Left cardiac atrium (tissue), 4 donors: ENCODE measurements at regions of chr1 and their contacts with region 1.

Region 1: GRCh38 chr1:60281360-60281932 is 207.9 kb upstream of the C1orf87 start:
- DNase-seq: peak; percentile 65
- ATAC-seq: peak; percentile 96 to 98

Region 2: GRCh38 chr1:59971464-59971911 is 310.0 kb before region 1 on chr1:
- intact Hi-C with region 1: loop called in 1 of 2 experiments (anchors 5 kb)
- DNase-seq: peak; percentile 71
- ATAC-seq: peak; percentile 84 to 89

Region 3: DNA sequence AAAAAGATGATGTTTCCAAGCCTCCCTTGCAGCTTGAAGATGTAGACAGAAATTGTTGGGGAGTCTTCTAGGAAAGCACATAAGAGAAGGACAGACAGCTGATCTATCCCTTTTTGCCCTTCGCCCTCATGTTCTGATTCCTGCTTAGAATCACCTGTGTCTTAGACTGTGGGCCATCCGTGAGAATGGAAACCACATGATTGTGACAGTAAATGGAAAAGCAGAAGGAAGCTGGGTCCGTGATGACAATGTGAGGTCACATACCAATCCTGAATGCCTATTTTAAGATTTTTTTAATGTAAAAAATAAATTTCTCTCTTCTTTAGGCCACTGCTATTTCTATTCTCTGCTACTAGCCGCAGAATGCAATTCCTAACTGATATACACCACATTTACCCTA is 140.2 kb before region 1 on chr1:
- intact Hi-C with region 1: no loop called
- DNase-seq: no peak
- ATAC-seq: no peak

Region 4: DNA sequence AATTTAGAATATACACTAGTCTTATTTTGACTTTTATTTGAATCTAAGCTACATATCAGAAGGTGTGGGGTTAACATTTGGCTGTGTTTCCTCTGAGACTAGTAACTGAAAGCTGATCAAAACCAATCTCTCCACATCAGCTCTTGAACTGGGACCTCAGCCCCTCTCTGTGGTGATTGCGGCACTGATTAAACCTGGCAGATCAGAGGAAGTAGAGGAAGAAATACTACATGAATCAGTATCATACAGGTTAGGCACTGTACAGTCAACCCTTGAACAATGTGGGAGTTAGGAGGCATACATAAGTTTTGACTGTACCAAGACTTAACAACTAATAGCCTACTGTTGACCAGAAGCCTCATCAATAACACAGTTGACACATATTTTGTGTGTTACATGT is 85.4 kb before region 1 on chr1:
- intact Hi-C with region 1: no loop called
- DNase-seq: no peak
- ATAC-seq: no peak

Region 5: GRCh38 chr1:60348884-60349283 is 67.4 kb after region 1 on chr1:
- intact Hi-C with region 1: no loop called
- DNase-seq: no peak
- ATAC-seq: no peak

Region 6: DNA sequence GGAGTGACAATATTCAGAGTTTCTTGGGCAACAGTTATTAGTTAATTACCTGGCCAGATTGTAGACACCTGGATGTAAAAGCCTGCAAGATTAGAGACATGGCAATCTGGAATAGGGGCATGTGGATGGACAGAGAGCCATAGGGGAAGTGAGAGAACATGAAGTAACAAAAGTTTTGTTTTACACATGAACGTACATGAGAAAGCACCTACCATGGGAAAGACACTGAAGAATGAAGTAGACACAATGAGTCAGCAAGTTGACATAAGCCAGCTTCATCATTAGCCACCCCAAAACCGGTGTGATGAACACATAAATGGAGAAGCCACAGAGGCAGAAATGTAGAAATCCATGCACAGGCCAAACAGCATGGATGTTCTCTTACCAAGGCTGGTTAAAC is 254.3 kb after region 1 on chr1:
- intact Hi-C with region 1: no loop called
- DNase-seq: no peak
- ATAC-seq: no peak

Region 7: DNA sequence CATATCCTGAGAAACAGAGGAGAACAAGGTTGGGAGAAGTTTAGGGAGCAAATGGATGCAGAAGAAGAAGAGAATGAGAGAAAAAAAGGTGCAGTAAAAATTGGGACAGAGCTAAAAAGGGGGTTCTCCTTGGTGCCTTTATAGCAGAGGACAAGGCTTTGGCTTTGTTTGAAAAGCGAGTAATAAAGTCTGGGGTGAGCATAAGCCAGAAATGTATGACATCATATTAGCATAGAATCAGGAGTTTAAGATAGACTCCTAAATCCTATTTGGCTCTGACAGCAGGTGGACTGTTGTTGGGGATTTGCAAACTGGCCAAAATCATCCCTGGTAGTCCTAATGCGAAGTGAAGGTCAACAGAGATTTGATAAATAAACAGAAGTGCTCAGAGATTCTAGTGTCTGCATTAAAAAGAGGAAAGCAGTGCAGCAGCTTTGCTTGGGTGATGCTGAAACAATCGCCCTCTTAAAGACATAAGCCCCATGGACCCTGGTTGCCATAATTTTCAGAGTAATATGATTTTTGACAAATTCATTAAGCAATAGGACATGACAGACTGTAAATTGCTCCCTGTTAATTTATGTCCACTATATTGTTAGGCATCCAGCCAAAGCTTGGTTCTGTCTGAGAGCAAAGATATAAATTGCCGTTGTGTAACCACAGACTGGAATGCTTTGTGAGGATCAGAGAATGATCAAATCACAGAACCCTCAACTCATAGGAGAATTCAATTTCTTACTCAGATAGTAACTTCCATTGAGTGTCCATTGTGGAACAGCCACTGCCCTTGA is 416.0 kb after region 1 on chr1:
- intact Hi-C with region 1: loop called in 1 of 2 experiments (anchors 10 kb)
- DNase-seq: no peak
- ATAC-seq: no peak

Region 8: GRCh38 chr1:60765204-60765603 is 483.8 kb after region 1 on chr1:
- intact Hi-C with region 1: loop called in 1 of 2 experiments (anchors 2 kb)
- DNase-seq: no peak
- ATAC-seq: peak; percentile 47 to 59

Region 9: GRCh38 chr1:60848583-60849188 is 567.2 kb after region 1 on chr1:
- intact Hi-C with region 1: loop called in 1 of 2 experiments (anchors 10 kb)
- DNase-seq: no peak
- ATAC-seq: no peak

Region 10: GRCh38 chr1:61043010-61043820 is 761.8 kb after region 1 on chr1:
- intact Hi-C with region 1: loop called in 1 of 2 experiments (anchors 5 kb)
- DNase-seq: peak; percentile 93
- ATAC-seq: peak; percentile 95 to 97

Region 11: GRCh38 chr1:61851849-61852669 is 1570.6 kb after region 1 on chr1:
- intact Hi-C with region 1: loop called in 1 of 2 experiments (anchors 5 kb)
- DNase-seq: no peak
- ATAC-seq: peak; percentile 72 to 78